Right cardiac atrium (tissue), 5 donors: ENCODE measurements at regions of chr22 and their contacts with region 1.

Region 1: GRCh38 chr22:40044102-40044869 is 49.5 kb downstream of the FAM83F start:
- DNase-seq: peak; percentile 96 to 99 (median 99)
- ATAC-seq: peak; percentile 97 to 98
- H3K4me3 ChIP-seq: peak overlapping the region; percentile 92
- H3K27ac ChIP-seq: peak overlapping the region; percentile 94
- H3K4me1 ChIP-seq: peaks cover 1% of the 10 kb centered on the region
- H3K27me3 ChIP-seq: no peaks in the 10 kb centered on the region

Region 2: GRCh38 chr22:40031766-40032470 is 12.4 kb before region 1 on chr22:
- intact Hi-C with region 1: no loop called
- DNase-seq: peak in 1 of 3 donors; percentile 37
- ATAC-seq: peak in 1 of 2 donors; percentile 51
- H3K4me3 ChIP-seq: no peak overlapping the region
- H3K27ac ChIP-seq: no peak overlapping the region
- H3K4me1 ChIP-seq: no peaks in the 10 kb centered on the region
- H3K27me3 ChIP-seq: no peaks in the 10 kb centered on the region

Region 3: DNA sequence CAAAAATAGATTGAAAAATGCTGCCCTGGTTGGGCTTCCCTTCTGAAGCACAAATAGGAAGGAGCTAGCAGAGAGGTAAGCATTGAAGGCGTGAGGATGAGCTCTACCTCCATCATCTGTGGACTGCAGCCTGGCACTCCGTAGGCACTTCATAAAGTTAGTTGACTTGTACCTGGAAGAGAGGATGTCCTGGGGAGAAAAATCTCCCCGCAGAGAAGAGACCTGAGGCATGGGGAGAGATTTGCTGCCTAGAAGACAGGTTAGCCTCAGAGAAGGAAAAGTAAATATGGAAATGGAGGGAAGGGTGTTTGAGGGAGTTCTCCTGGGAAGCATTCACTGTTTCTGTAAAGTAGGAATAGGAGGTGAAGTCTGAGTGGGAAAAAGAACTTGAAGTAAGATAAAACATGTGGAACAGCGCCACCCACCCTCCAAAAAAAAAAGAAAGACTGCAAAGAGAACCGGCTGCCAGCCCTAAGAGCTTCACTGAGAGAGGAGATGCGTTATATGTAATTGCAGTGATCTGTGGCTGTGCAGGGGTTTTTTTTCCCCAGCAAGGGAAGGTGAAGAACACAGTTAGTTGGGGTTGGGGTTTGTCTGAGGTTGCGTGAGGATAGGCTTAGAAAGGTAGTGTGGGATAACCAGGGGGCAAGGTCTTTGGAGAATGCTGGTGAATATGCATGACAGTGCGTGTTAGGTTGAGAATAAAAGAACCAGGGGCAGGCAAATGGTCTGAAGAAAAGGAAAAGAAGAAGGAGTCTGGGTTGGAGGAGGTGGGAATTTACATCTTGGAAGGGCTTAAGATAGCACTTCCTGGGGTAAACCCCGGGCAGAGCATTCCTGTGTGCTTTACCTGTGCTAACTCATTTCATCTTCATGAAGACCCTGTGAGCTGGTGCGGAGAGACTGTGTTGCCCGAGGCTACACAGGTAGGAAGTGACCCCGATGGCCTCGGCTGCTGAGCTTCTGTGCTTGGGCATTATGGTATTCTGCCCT is 149.4 kb after region 1 on chr22:
- intact Hi-C with region 1: loop called in 1 of 4 experiments (anchors 10 kb)
- DNase-seq: no peak
- ATAC-seq: no peak
- H3K4me3 ChIP-seq: no peak overlapping the region
- H3K27ac ChIP-seq: no peak overlapping the region
- H3K4me1 ChIP-seq: peaks cover 27% of the 10 kb centered on the region
- H3K27me3 ChIP-seq: no peaks in the 10 kb centered on the region

Region 4: GRCh38 chr22:40312050-40312449 is 267.8 kb after region 1 on chr22:
- intact Hi-C with region 1: no loop called
- DNase-seq: no peak
- ATAC-seq: no peak
- H3K4me3 ChIP-seq: no peak overlapping the region
- H3K27ac ChIP-seq: no peak overlapping the region
- H3K4me1 ChIP-seq: peaks cover 2% of the 10 kb centered on the region
- H3K27me3 ChIP-seq: no peaks in the 10 kb centered on the region

Region 5: DNA sequence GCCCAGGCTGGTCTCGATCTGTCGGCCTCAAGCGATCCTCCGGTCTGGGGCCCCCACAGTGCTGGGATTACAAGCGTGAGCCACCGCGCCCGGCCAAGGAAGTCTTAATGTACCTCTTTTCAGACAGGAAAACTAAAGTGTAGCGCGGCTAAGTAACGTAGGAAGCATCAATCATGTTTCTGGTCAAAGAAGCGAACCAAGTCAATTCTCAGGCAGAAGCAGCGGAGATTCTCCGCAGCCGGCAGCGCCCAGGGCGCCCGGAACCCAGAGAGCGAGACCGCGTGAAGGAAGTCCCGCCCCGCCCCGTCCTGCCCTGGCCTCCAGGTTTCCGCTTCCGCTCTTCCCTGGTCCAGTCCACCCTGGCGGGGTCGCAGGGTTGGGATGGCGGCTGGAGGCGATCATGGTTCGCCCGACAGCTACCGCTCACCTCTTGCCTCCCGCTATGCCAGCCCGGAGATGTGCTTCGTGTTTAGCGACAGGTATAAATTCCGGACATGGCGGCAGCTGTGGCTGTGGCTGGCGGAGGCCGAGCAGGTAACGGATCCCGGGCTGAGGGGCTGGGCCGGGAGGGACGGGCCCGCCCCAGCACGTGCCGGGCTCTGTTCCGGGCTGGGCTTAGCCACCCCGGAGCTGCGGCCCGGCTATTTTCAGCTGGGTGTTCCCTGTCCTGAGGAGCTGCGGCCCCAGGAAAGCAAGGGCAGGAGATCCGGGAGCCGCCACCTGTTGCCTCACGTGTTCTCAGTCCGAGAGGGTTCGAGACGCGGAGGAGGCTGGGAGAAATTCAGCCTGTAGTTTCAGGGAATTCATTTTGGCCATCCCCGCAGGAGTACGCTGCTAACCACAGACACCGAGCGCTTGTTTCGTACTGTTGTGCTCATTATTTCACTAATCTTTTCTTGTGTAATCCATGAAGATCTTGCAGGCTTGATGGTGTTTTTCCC is 302.2 kb after region 1 on chr22 and contains the start of gene ADSL:
- intact Hi-C with region 1: loop called in 1 of 4 experiments (anchors 10 kb)
- DNase-seq: peak; percentile 91 to 96 (median 95)
- ATAC-seq: peak; percentile 99
- H3K4me3 ChIP-seq: peak within 1 kb of the TSS; percentile 36
- H3K27ac ChIP-seq: peak within 1 kb of the TSS; percentile 65
- H3K4me1 ChIP-seq: no peaks in the 10 kb centered on the region
- H3K27me3 ChIP-seq: no peaks in the 10 kb centered on the region
- total RNA-seq, gene ADSL: 35.9 to 51.0 (median 39.9) TPM